Activated naive CD4-positive, alpha-beta T cell treated with anti-CD3 and anti-CD28 coated beads for 36 hours (primary cell): ENCODE measurements at regions of chr10 and their contacts with region 1.

Region 1: GRCh38 chr10:4656576-4657182 is 169.3 kb upstream of the AKR1E2 start:
- DNase-seq: peak; percentile 58
- H3K4me3 Mint-ChIP-seq: no peak overlapping the region
- H3K27ac Mint-ChIP-seq: no peak overlapping the region
- H3K4me1 Mint-ChIP-seq: peaks cover 18% of the 10 kb centered on the region
- H3K27me3 Mint-ChIP-seq: peaks cover 9% of the 10 kb centered on the region

Region 2: GRCh38 chr10:3095373-3096139 is 1561.1 kb before region 1 on chr10:
- CTCF ChIA-PET with region 1: no interaction called
- intact Hi-C with region 1: loop called (anchors 5 kb)
- DNase-seq: peak; percentile 79
- H3K4me3 Mint-ChIP-seq: peak overlapping the region; percentile 27
- H3K27ac Mint-ChIP-seq: peak overlapping the region; percentile 81
- H3K4me1 Mint-ChIP-seq: peaks cover 56% of the 10 kb centered on the region
- H3K27me3 Mint-ChIP-seq: no peaks in the 10 kb centered on the region

Region 3: GRCh38 chr10:3239066-3239919 is 1417.4 kb before region 1 on chr10:
- CTCF ChIA-PET with region 1: no interaction called
- intact Hi-C with region 1: loop called (anchors 1 kb)
- DNase-seq: peak; percentile 81
- H3K4me3 Mint-ChIP-seq: no peak overlapping the region
- H3K27ac Mint-ChIP-seq: no peak overlapping the region
- H3K4me1 Mint-ChIP-seq: peaks cover 3% of the 10 kb centered on the region
- H3K27me3 Mint-ChIP-seq: peaks cover 33% of the 10 kb centered on the region

Region 4: DNA sequence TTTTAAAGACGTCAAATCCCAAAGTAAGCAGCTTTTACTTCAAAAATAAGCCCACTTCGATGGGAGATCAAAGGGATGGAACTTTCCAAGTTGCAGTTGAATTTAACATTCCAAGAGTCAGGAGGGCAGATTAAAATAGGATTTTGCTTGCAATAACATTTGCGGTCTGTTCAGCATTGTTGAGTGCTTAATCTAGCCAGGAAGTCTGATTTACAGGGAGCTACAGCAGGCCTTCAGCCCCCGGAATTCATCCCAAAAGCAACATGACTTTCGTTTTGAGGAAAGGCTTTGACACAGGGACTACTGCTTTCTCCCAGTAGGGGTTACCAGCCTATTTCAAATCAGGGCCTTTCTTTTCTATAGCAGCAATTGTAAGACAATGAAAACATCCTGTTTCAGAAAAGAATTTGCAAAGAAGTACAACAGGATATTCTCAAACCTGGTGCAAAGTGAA is 1204.5 kb before region 1 on chr10:
- CTCF ChIA-PET with region 1: no interaction called
- intact Hi-C with region 1: loop called (anchors 5 kb)
- DNase-seq: no peak
- H3K4me3 Mint-ChIP-seq: no peak overlapping the region
- H3K27ac Mint-ChIP-seq: no peak overlapping the region
- H3K4me1 Mint-ChIP-seq: peaks cover 39% of the 10 kb centered on the region
- H3K27me3 Mint-ChIP-seq: no peaks in the 10 kb centered on the region

Region 5: GRCh38 chr10:3972460-3973301 is 684.0 kb before region 1 on chr10:
- CTCF ChIA-PET with region 1: no interaction called
- intact Hi-C with region 1: loop called (anchors 10 kb)
- DNase-seq: peak; percentile 51
- H3K4me3 Mint-ChIP-seq: peak overlapping the region; percentile 62
- H3K27ac Mint-ChIP-seq: peak overlapping the region; percentile 92
- H3K4me1 Mint-ChIP-seq: peaks cover 44% of the 10 kb centered on the region
- H3K27me3 Mint-ChIP-seq: no peaks in the 10 kb centered on the region

Region 6: GRCh38 chr10:4241724-4242345 is 414.8 kb before region 1 on chr10:
- CTCF ChIA-PET with region 1: no interaction called
- intact Hi-C with region 1: loop called (anchors 10 kb)
- DNase-seq: no peak
- H3K4me3 Mint-ChIP-seq: no peak overlapping the region
- H3K27ac Mint-ChIP-seq: no peak overlapping the region
- H3K4me1 Mint-ChIP-seq: peaks cover 27% of the 10 kb centered on the region
- H3K27me3 Mint-ChIP-seq: peaks cover 2% of the 10 kb centered on the region

Region 7: GRCh38 chr10:4512671-4513240 is 143.9 kb before region 1 on chr10:
- CTCF ChIA-PET with region 1: interaction called, 3 read pairs
- intact Hi-C with region 1: loop called (anchors 2 kb)
- DNase-seq: peak; percentile 41
- H3K4me3 Mint-ChIP-seq: no peak overlapping the region
- H3K27ac Mint-ChIP-seq: no peak overlapping the region
- H3K4me1 Mint-ChIP-seq: peaks cover 9% of the 10 kb centered on the region
- H3K27me3 Mint-ChIP-seq: peaks cover 20% of the 10 kb centered on the region

Region 8: DNA sequence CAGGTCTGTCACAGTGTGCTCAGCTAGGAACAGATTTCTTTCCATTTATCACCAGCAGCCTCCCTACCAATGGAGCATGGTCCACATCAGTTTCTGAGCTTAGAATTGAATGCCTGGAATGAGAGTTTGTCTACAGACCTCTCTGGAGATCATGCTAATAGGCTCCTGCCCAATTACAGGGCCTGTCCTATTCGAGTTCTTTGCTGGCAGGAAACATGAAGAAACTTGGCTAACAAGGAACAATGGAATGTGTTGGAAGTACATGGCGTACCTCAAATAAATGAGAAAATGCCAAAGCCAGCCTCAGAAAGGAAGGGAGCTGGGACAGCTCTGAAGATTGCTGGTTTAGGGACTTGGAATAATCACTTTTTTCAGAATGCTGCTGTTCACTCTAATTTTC is 16.7 kb before region 1 on chr10:
- CTCF ChIA-PET with region 1: no interaction called
- intact Hi-C with region 1: no loop called
- DNase-seq: no peak
- H3K4me3 Mint-ChIP-seq: no peak overlapping the region
- H3K27ac Mint-ChIP-seq: no peak overlapping the region
- H3K4me1 Mint-ChIP-seq: peaks cover 5% of the 10 kb centered on the region
- H3K27me3 Mint-ChIP-seq: no peaks in the 10 kb centered on the region